ENCODE measurements at regions of chr3 and their contacts with region 1.

Region 1: GRCh38 chr3:150830094-150830681 is 67.2 kb upstream of the SIAH2 start:
- DNase-seq: no peak
- H3K4me3 ChIP-seq: no peak overlapping the region
- H3K27ac ChIP-seq: no peak overlapping the region
- H3K4me1 ChIP-seq: no peaks in the 10 kb centered on the region; a peak in 1 of 7 replicates
- H3K27me3 ChIP-seq: no peaks in the 10 kb centered on the region; a peak in 1 of 7 replicates
- CTCF ChIP-seq: peak in 2 of 3 experiments; percentile 55 to 57; a peak in 3 of 4 replicates
- EP300 ChIP-seq: no peak
- POLR2A ChIP-seq: no peak
- RAD21 ChIP-seq: peak; percentile 46

Region 2: GRCh38 chr3:150775091-150775501 is 55.1 kb before region 1 on chr3:
- CTCF ChIA-PET with region 1: interaction called, 13 read pairs
- POLR2A ChIA-PET with region 1: no interaction called
- DNase-seq: no peak
- H3K4me3 ChIP-seq: no peak overlapping the region
- H3K27ac ChIP-seq: no peak overlapping the region
- H3K4me1 ChIP-seq: no peaks in the 10 kb centered on the region
- H3K27me3 ChIP-seq: no peaks in the 10 kb centered on the region
- CTCF ChIP-seq: no peak
- EP300 ChIP-seq: no peak
- POLR2A ChIP-seq: no peak
- RAD21 ChIP-seq: no peak

Region 3: DNA sequence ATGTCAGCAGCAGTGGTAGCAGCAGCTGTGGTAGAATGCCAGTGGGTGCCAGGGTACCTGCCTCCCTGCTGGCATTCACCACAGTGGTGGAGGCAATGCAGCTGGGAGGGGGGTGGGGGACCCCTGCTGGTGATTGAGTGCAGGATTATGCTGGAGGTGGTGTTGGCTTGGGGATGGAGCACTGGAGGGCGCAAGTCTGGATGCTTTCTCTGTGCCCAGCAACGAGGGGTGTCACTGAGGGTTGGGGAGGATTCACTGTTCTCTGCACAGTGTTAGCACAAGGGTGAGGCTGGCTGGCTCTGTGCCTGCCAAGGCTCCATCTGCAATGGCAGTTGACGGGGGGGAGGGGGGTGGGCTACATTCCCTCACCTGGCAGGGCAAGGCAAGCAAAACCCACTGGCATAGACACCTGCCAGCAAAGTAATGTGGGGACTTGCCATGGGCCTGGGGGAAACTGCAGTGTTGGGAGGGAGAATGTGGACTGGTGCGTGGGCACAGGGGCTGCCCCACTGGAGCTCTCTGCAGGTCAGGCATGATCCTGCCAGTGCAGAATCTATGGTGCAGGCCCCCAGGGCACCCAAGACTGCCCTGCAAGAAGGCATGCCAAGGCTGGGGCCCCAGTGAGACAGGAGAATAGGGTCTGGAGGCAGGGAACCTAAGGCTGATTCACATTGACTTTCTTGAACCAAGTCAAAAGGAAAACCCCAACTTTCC is 10.8 kb after region 1 on chr3:
- CTCF ChIA-PET with region 1: interaction called, 12 read pairs
- POLR2A ChIA-PET with region 1: no interaction called
- DNase-seq: no peak
- H3K4me3 ChIP-seq: no peak overlapping the region
- H3K27ac ChIP-seq: no peak overlapping the region
- H3K4me1 ChIP-seq: peaks cover 0 to 3% (median 1%) of the 10 kb centered on the region in 4 experiments; a peak in 2 of 7 replicates
- H3K27me3 ChIP-seq: peaks cover 5 to 17% (median 14%) of the 10 kb centered on the region in 4 experiments; a peak in 6 of 7 replicates
- CTCF ChIP-seq: peak; percentile 21 to 58 (median 37)
- EP300 ChIP-seq: no peak
- POLR2A ChIP-seq: no peak
- RAD21 ChIP-seq: peak; percentile 23 to 41; a peak in 3 of 4 replicates